Caco-2 (cell line): ENCODE measurements at regions of chr16 and their contacts with region 1.

Region 1: DNA sequence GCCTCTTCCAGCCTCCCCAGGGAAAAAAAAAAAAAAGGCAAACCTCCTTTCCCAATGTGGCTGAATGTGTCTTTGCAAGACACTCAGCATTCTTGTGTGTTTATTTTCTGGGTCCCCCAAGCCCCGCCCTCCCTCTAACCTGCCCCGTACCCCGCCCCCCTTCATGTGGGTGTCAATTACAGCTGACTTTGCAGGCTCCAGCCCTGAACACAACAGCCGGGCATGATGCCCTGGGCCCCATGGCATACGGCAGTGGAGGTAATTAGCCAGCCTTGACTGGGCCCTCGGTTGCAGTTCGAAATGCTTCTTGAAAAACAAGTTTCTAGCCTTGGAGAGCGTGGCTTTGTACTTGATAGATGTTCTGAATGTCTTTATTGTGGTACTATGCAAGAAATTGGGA is 354.7 kb upstream of the RBFOX1 start:
- DNase-seq: no peak
- H3K4me3 ChIP-seq: no peak overlapping the region
- H3K4me3 Mint-ChIP-seq: no peak overlapping the region
- H3K27ac Mint-ChIP-seq: peak overlapping the region; percentile 86
- H3K4me1 ChIP-seq: peaks cover 17% of the 10 kb centered on the region
- H3K4me1 Mint-ChIP-seq: peaks cover 21% of the 10 kb centered on the region
- H3K27me3 ChIP-seq: no peaks in the 10 kb centered on the region
- H3K27me3 Mint-ChIP-seq: no peaks in the 10 kb centered on the region
- CTCF ChIP-seq: no peak

Region 2: DNA sequence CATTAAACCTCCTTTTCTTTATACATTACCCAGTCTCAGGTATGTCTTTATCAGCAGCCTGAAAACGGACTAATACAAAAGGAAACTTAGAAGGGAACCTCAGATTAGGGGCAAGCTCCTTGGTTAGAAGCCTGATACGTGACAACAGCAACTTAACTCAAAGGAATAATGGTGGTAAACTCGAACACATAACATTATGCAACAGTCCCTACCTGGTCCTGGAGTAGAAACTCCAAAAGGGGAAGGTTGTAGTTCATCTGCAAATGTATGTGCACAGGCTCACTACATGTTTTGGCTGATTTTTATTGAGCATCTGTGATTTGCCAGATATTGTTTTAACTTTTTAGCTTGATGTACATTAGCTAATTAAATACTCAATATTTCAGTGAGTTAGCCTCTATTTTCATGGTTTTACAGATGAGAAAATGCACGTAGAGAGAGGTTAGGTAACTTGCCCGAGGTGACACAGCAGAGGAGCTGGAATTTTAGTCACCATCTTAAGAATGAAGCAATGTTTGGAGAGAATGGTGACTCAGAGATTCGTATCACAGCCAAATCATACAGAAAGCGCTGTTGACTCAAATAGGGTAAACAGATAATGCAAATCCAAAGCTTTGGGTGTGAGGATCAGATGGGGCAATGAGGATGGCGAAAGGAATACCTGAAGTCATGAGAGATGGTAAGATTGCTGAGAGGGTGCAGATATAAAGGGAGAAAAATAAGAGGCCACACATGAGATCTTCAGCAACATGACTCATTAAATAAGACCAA is 159.8 kb after region 1 on chr16:
- CTCF ChIA-PET with region 1: no interaction called
- POLR2A ChIA-PET with region 1: no interaction called
- intact Hi-C with region 1: loop called (anchors 5 kb)
- DNase-seq: peak; percentile 37 to 69
- H3K4me3 ChIP-seq: no peak overlapping the region
- H3K4me3 Mint-ChIP-seq: no peak overlapping the region
- H3K27ac Mint-ChIP-seq: peak overlapping the region; percentile 23
- H3K4me1 ChIP-seq: peaks cover 16% of the 10 kb centered on the region
- H3K4me1 Mint-ChIP-seq: peaks cover 26% of the 10 kb centered on the region
- H3K27me3 ChIP-seq: no peaks in the 10 kb centered on the region
- H3K27me3 Mint-ChIP-seq: no peaks in the 10 kb centered on the region
- CTCF ChIP-seq: no peak

Region 3: GRCh38 chr16:7200320-7200719 is 222.4 kb after region 1 on chr16:
- CTCF ChIA-PET with region 1: no interaction called
- POLR2A ChIA-PET with region 1: no interaction called
- intact Hi-C with region 1: no loop called
- DNase-seq: no peak
- H3K4me3 ChIP-seq: no peak overlapping the region
- H3K4me3 Mint-ChIP-seq: no peak overlapping the region
- H3K27ac Mint-ChIP-seq: no peak overlapping the region
- H3K4me1 ChIP-seq: no peaks in the 10 kb centered on the region
- H3K4me1 Mint-ChIP-seq: no peaks in the 10 kb centered on the region
- H3K27me3 ChIP-seq: no peaks in the 10 kb centered on the region
- H3K27me3 Mint-ChIP-seq: no peaks in the 10 kb centered on the region
- CTCF ChIP-seq: no peak

Region 4: DNA sequence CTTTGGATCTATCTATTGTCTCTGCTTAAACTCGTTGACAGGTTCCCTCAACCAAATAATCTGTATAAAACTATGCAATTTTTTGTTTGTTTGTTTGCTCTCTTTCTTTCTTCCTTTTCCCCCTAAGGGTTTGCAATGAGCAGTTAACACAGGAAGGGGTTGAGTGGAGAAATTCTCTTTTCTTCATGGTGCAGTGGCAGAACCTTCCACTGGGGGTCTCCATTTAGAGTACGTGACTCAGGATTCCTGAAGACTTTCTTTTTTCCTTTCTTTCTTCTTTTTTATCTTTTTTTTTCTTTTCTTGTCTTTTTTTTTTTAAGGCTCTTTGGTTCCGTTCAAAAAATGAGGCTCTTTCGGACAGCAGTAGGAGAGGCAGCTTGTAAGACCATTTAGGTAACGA is 335.3 kb after region 1 on chr16:
- CTCF ChIA-PET with region 1: no interaction called
- POLR2A ChIA-PET with region 1: no interaction called
- intact Hi-C with region 1: no loop called
- DNase-seq: peak in 1 of 2 experiments; percentile 5
- H3K4me3 ChIP-seq: no peak overlapping the region
- H3K4me3 Mint-ChIP-seq: no peak overlapping the region
- H3K27ac Mint-ChIP-seq: no peak overlapping the region
- H3K4me1 ChIP-seq: no peaks in the 10 kb centered on the region
- H3K4me1 Mint-ChIP-seq: no peaks in the 10 kb centered on the region
- H3K27me3 ChIP-seq: no peaks in the 10 kb centered on the region
- H3K27me3 Mint-ChIP-seq: peaks cover 3% of the 10 kb centered on the region
- CTCF ChIP-seq: peak; percentile 51 to 56